ENCODE measurements at regions of chr16 and their contacts with region 1.

Region 1: DNA sequence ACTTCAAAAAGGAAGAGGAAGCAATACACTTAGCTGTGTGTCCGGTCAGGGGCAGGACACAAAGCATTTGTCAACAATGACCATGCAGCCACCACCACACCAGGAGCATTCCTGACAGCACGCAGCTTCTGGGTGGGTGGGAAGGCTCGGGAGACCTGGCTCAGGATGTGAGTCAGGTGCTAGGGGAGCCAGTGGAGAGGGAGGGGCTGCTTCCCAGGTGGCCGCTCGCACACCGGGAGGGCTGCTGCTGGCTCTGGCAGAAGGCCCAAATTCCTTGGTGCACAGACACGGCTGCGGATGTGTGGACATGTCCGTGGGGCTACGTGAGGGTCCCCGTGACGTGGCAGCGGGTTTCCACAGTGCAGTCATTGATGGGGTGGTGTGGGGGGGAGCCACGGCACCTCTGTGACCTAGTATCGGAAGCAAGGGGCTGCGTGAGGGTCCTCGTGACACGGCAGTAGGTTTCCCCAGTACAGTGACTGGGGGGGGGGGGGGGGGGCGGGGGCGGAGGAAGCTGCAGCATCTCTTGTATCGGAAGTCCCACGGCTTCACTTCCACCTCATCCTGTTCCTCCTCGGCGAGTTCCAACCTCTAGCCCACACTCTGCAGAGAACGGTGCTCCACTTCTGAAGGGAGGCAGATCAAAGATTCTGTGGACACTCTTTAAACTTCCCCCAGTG is 112.8 kb downstream of the ZNF778 start:
- DNase-seq: peak in 2 of 5 donors; percentile 43 to 48
- H3K4me3 ChIP-seq: no peak overlapping the region
- H3K27ac ChIP-seq: no peak overlapping the region
- H3K4me1 ChIP-seq: peaks cover 32% of the 10 kb centered on the region
- H3K27me3 ChIP-seq: no peaks in the 10 kb centered on the region
- CTCF ChIP-seq: no peak
- EP300 ChIP-seq: no peak
- POLR2A ChIP-seq: no peak

Region 2: GRCh38 chr16:89484923-89485679 is 154.8 kb after region 1 on chr16:
- intact Hi-C with region 1: loop called in 1 of 4 experiments (anchors 5 kb)
- DNase-seq: no peak
- H3K4me3 ChIP-seq: no peak overlapping the region
- H3K27ac ChIP-seq: no peak overlapping the region
- H3K4me1 ChIP-seq: peaks cover 30% of the 10 kb centered on the region
- H3K27me3 ChIP-seq: no peaks in the 10 kb centered on the region
- CTCF ChIP-seq: no peak
- EP300 ChIP-seq: no peak
- POLR2A ChIP-seq: no peak

Region 3: DNA sequence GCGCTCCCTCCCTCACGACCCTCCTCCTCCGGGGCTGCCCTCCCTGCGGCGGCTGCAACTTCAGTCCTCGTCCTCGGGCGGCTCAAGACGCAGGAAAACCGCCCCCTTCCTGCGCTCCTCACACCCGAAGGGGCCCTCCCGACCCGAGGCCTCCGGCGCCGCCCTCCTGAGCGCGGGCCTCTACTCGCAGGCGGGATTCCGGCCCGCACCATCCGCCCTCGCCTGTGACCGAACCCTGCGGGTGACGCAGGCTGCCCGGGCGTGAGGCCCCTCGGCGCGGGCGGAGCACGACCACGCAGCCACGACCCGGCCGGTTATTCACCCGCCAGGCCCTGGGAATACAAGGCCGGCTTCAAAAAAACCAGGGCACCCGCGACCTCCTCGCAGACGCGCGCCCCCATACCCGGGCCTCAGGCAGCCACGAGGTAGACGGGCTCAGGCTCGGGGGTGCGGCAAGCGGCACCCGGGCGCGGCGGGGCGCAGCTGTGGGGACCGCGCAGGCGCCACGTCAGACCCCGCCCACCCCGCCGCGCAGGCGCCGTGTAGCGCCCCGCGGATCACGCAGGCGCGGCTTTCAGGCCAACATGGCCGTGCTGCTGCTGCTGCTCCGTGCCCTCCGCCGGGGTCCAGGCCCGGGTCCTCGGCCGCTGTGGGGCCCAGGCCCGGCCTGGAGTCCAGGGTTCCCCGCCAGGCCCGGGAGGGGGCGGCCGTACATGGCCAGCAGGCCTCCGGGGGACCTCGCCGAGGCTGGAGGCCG is 177.7 kb after region 1 on chr16 and contains the start of gene SPG7:
- intact Hi-C with region 1: loop called in 3 of 4 experiments (anchors 5 kb)
- DNase-seq: peak; percentile 81 to 94 (median 88)
- H3K4me3 ChIP-seq: peak within 1 kb of the TSS; percentile 83
- H3K27ac ChIP-seq: peak within 1 kb of the TSS; percentile 56 to 93
- H3K4me1 ChIP-seq: peaks cover 13% of the 10 kb centered on the region
- H3K27me3 ChIP-seq: no peaks in the 10 kb centered on the region
- CTCF ChIP-seq: peak in 2 of 3 donors; percentile 14 to 23
- EP300 ChIP-seq: no peak
- POLR2A ChIP-seq: peak; percentile 80
- total RNA-seq, gene SPG7: 73.5 to 145 (median 96.0) TPM

Region 4: GRCh38 chr16:89560378-89561141 is 230.2 kb after region 1 on chr16 and contains the start of gene RPL13:
- intact Hi-C with region 1: loop called in 2 of 4 experiments (anchors 5 to 10 kb)
- DNase-seq: peak; percentile 94 to 96 (median 95)
- H3K4me3 ChIP-seq: peak within 1 kb of the TSS; percentile 65
- H3K27ac ChIP-seq: peak within 1 kb of the TSS; percentile 76 to 96
- H3K4me1 ChIP-seq: peaks cover 8% of the 10 kb centered on the region
- H3K27me3 ChIP-seq: no peaks in the 10 kb centered on the region
- CTCF ChIP-seq: peak in 1 of 3 donors; percentile 5
- EP300 ChIP-seq: peak; percentile 34
- POLR2A ChIP-seq: peak; percentile 98
- total RNA-seq, gene RPL13: 4,259 to 21,366 (median 5,883) TPM